Common myeloid progenitor, CD34-positive (primary cell): ENCODE measurements at regions of chr15 and their contacts with region 1.

Region 1: GRCh38 chr15:89171136-89172072 is 50.0 kb downstream of the RLBP1 start:
- DNase-seq: peak; percentile 33 to 56 (median 53)
- H3K4me3 ChIP-seq: no peak overlapping the region
- H3K27ac ChIP-seq: no peak overlapping the region
- H3K4me1 ChIP-seq: peaks cover 15 to 31% (median 25%) of the 10 kb centered on the region in 4 experiments
- H3K27me3 ChIP-seq: no peaks in the 10 kb centered on the region

Region 2: GRCh38 chr15:89087830-89088604 is 83.4 kb before region 1 on chr15 and contains the start of gene ABHD2:
- CTCF ChIA-PET with region 1: interaction called, 28 read pairs
- POLR2A ChIA-PET with region 1: no interaction called
- DNase-seq: peak; percentile 100
- H3K4me3 ChIP-seq: peak within 1 kb of the TSS; percentile 70 to 95 (median 91)
- H3K27ac ChIP-seq: peak within 1 kb of the TSS; percentile 77 to 89
- H3K4me1 ChIP-seq: peaks cover 27 to 70% (median 56%) of the 10 kb centered on the region in 4 experiments
- H3K27me3 ChIP-seq: no peaks in the 10 kb centered on the region

Region 3: GRCh38 chr15:89101302-89102191 is 69.9 kb before region 1 on chr15:
- CTCF ChIA-PET with region 1: interaction called, 10 read pairs
- POLR2A ChIA-PET with region 1: no interaction called
- DNase-seq: peak in 1 of 3 donors; percentile 44
- H3K4me3 ChIP-seq: no peak overlapping the region
- H3K27ac ChIP-seq: no peak overlapping the region
- H3K4me1 ChIP-seq: peaks cover 0 to 15% (median 5%) of the 10 kb centered on the region in 4 experiments
- H3K27me3 ChIP-seq: no peaks in the 10 kb centered on the region

Region 4: DNA sequence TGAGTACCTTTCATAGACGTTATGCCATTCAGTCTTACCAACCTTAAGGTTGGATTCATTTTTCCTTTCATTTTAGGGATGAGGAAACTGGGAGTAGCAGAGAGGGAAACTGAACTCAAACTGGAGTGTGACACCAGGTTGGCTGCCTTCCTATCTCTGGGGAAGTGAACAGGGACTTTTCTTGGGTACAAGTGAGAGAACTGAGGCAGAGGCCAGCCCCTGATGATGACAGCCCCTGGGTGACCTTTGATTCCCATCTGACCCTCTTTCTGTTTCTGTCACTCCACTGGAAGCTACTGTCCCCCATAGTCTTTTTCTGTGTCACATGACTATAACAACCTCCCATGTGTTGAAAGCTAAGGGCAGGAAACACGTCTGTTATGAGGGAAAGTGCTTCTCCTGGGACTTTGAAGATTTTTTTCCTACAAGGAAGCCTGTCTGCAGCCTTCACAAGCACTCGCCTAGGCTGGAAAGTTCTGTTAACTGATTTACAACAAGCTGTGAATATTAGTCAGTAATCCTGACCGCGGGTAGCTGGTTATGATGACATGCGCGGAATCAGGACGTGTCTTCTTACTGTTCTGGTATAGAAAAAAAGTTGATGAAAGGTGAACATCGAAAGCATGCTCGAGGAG is 51.8 kb before region 1 on chr15:
- CTCF ChIA-PET with region 1: interaction called, 13 read pairs
- POLR2A ChIA-PET with region 1: no interaction called
- DNase-seq: no peak
- H3K4me3 ChIP-seq: no peak overlapping the region
- H3K27ac ChIP-seq: no peak overlapping the region
- H3K4me1 ChIP-seq: peaks cover 5 to 29% (median 13%) of the 10 kb centered on the region in 4 experiments
- H3K27me3 ChIP-seq: no peaks in the 10 kb centered on the region

Region 5: GRCh38 chr15:89129123-89129815 is 42.1 kb before region 1 on chr15:
- CTCF ChIA-PET with region 1: interaction called, 44 read pairs
- POLR2A ChIA-PET with region 1: no interaction called
- DNase-seq: peak in 2 of 3 donors; percentile 46 to 59
- H3K4me3 ChIP-seq: no peak overlapping the region
- H3K27ac ChIP-seq: peak overlapping the region in 1 of 2 experiments; percentile 59
- H3K4me1 ChIP-seq: peaks cover 35 to 61% (median 58%) of the 10 kb centered on the region in 4 experiments
- H3K27me3 ChIP-seq: no peaks in the 10 kb centered on the region

Region 6: GRCh38 chr15:89136818-89137772 is 34.3 kb before region 1 on chr15:
- CTCF ChIA-PET with region 1: interaction called, 44 read pairs
- POLR2A ChIA-PET with region 1: no interaction called
- DNase-seq: no peak
- H3K4me3 ChIP-seq: no peak overlapping the region
- H3K27ac ChIP-seq: no peak overlapping the region
- H3K4me1 ChIP-seq: peaks cover 25 to 68% (median 62%) of the 10 kb centered on the region in 4 experiments
- H3K27me3 ChIP-seq: no peaks in the 10 kb centered on the region

Region 7: DNA sequence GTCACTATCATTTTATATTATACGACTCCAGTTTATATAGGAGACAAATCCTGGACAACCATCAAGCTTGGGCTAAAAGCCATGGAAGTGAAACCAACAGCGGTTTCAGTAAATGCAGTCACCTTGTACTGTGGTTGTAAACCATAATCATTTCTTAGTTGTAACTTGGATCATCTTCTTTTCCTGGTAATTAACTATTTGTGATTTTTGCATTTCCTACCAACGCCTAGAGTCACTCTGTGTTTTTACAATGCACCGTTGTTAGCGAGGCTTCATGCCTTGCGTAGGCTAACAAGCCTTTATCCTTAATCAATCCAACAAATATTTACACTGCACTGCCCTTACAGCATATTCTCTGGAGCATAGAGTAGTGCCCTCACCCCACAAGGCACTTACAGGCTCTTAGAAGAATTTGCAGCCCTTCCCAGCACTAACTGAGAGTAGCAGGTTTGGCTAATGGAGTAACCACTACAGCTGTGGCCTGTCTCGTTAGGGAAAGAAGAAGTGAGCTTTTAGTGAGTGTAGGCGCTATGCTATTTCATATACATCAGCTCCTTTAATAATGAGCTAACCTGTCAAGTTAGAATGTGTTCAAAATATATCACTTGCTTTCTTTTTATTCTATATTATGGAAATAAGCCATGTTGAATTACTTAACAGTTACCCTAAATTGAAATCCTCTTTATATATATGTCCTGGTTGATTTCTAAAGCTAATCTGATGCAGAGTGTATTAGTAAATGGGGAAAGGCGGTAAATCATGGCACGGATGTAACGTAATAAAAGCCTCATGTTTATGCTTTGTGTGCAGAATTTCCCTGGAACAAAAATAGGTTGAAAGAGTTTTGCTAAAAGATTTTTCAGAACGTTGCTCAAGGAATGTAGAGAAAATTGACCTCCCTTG is 20.4 kb before region 1 on chr15:
- CTCF ChIA-PET with region 1: interaction called, 10 read pairs
- POLR2A ChIA-PET with region 1: no interaction called
- DNase-seq: peak in 2 of 3 donors; percentile 48 to 53
- H3K4me3 ChIP-seq: no peak overlapping the region
- H3K27ac ChIP-seq: no peak overlapping the region
- H3K4me1 ChIP-seq: peaks cover 0 to 18% (median 4%) of the 10 kb centered on the region in 4 experiments
- H3K27me3 ChIP-seq: no peaks in the 10 kb centered on the region

Region 8: GRCh38 chr15:89243046-89243690 is 71.8 kb after region 1 on chr15:
- CTCF ChIA-PET with region 1: no interaction called
- POLR2A ChIA-PET with region 1: no interaction called
- DNase-seq: peak in 1 of 3 donors; percentile 1
- H3K4me3 ChIP-seq: peak overlapping the region; percentile 81 to 100 (median 94)
- H3K27ac ChIP-seq: no peak overlapping the region
- H3K4me1 ChIP-seq: peaks cover 6 to 22% (median 11%) of the 10 kb centered on the region in 4 experiments
- H3K27me3 ChIP-seq: peaks cover 0 to 4% (median 0%) of the 10 kb centered on the region in 5 experiments